ENCODE measurements at regions of chr15 and their contacts with region 1.

Region 1: DNA sequence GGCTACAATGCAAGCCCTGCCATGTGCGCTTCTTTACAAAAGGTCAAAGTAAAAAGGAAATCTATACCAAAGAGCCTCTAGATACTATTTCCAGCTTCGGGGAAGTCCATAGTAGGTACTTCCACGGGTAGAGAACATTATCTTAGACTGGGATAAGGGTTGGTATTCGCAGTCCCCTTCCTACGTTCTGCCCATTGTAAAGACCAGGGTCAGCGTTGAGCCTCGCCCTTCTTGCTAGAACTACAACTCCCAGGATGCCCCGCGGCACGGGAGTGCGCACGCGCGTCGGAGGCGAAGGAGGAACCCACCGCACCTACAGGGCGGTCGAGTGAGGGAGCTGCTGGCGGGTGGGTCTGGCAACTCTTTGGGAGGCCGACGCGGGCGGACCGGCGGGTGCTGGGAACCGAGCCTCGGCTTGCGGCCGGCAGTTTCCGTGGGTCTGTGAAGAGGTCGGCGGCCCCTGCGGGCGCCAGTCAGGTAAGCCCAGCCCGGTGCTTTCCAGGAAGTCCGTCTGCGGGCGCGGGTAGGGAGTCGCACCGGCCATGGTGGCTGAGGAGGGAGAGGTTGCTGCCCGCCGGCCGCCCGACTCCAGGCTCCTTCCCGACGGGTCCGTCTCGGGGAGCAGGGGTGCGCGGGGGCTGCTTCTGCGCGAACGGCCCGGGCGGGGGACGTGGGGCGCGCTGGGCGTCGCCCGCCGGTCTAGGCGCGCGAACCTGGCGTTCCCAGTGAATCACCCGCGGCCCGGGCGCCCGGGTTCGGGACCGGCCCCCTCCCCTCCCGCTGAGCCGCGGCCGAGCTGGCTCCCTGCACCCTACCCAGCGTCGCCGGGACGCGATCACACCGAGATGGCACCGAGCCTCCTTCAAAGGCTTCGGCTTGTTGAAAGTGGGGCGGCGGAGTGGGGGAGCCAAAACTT is at the start of gene TMOD3:
- DNase-seq: peak; percentile 96
- ATAC-seq: peak; percentile 99
- total RNA-seq, gene TMOD3: 19.9 TPM

Region 2: GRCh38 chr15:51516291-51516690 is 313.3 kb before region 1 on chr15:
- intact Hi-C with region 1: no loop called
- DNase-seq: no peak
- ATAC-seq: no peak

Region 3: GRCh38 chr15:51888593-51889195 is 59.1 kb after region 1 on chr15:
- intact Hi-C with region 1: loop called (anchors 10 kb)
- DNase-seq: no peak
- ATAC-seq: peak; percentile 28